Heart right ventricle (tissue), 16 donors: ENCODE measurements at regions of chr12 and their contacts with region 1.

Region 1: DNA sequence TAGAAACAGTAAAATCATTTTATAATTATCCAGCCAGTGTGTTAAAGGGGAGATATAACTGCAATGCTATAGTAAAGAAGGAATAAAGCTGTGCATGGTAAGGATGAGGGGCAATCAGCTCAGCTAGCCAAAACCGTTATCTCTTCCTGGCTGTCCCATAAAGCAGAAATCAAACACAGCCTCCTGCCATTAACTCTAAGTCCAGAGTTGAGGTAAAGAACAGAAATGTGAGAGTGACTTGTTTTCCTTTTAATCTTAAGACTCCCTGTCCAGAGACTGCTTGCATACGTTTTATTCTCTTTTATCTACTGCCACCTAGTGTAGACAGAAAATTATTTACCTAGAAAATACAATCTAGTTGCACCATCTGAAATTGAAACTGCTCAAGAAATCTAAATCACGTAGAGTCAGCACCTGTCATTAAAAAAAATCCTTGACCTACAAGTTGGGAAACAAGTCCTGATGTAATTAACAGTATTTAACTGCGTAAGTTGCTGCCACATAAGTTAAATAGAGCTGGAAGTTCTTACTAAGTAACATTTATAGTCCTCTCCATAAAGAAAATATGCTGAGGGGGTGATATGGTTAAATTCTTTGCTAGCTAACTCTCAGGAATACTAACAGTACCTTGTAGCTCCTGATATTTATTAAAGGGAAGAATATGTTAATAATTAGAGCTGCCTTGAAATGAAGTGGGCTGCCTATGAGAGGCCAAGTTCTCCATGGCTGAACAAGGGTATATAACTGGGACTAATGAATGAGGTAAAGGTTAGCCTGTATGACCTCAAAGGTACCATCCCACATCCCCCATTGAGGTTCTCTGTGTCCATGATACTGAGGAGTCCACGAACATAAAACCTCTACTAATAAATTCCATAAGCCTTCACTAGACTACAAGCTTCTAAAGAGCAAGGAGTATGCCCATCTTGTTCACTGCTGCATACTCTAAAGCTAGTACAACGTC is 62.7 kb downstream of the GALNT4 start:
- DNase-seq: no peak
- ATAC-seq: peak; percentile 70 to 96 (median 91)
- H3K4me3 ChIP-seq: peak overlapping the region in 6 of 10 donors; percentile 8 to 34 (median 20)
- H3K27ac ChIP-seq: peak overlapping the region in 9 of 10 donors; percentile 5 to 66 (median 41)
- H3K4me1 ChIP-seq: peaks cover 0 to 19% (median 11%) of the 10 kb centered on the region in 9 donors
- H3K27me3 ChIP-seq: no peaks in the 10 kb centered on the region
- CTCF ChIP-seq: peak; percentile 43 to 74 (median 60)

Region 2: DNA sequence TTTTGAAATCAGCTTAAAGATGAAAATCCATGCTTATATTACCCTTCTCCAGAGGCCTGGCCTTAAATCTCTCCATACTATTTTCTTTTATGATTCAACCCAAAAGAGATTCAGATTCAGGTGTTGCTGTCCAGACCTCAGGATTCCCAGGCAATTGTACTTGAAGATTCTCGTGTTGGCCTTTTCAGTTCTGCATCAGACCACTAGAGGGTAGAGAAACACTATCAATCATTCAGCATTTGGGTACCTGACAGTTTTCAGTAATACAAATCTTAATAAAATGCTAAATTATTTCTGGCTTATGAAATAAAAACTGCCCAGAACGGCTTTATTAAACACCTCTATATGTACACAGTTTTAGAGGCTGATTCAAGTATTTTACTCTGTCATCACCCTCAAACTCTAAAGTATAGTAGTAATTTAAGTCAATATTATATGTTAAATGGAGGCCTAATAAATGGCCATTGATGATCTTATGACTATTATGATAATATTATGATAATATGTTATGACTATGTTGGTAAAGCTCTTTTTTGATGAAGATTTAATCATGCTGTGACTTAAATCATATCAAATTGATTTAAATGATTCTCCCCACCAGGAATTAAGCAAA is 410.8 kb before region 1 on chr12:
- intact Hi-C with region 1: loop called (anchors 1 to 5 kb)
- DNase-seq: peak in 1 of 2 donors; percentile 44
- ATAC-seq: peak in 6 of 8 donors; percentile 70 to 85 (median 79)
- H3K4me3 ChIP-seq: no peak overlapping the region
- H3K27ac ChIP-seq: no peak overlapping the region
- H3K4me1 ChIP-seq: peaks cover 0 to 7% (median 0%) of the 10 kb centered on the region in 9 donors
- H3K27me3 ChIP-seq: no peaks in the 10 kb centered on the region
- CTCF ChIP-seq: peak; percentile 83 to 97 (median 93)

Region 3: DNA sequence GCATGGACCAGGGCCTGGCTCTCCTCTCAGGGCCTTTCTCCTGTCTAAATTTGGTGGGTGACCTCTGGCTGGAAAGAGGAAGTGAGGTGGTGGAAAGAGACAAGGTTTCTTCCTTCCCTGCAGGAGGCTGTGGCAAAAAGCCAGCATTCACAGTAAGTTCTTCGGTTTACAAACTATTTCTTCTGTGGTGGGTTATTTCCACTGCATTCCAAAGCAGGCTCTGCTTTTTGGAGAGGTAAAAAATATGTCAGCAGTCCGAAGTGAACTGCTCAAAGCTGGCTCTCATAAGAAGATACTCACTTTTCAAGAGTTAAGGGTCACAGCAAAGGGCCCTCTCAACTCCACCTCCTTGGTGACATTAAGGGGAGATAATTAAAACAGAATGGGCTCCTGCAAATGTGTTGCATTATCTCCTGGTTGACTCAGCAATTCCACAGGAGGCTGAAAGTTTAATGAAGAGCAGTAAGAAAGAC is 112.8 kb after region 1 on chr12:
- intact Hi-C with region 1: no loop called
- DNase-seq: peak in 1 of 2 donors; percentile 47
- ATAC-seq: peak in 3 of 8 donors; percentile 44 to 65 (median 58)
- H3K4me3 ChIP-seq: no peak overlapping the region
- H3K27ac ChIP-seq: peak overlapping the region in 1 of 10 donors; percentile 16
- H3K4me1 ChIP-seq: peaks cover 0 to 14% (median 4%) of the 10 kb centered on the region in 9 donors
- H3K27me3 ChIP-seq: no peaks in the 10 kb centered on the region
- CTCF ChIP-seq: no peak

Region 4: GRCh38 chr12:89907659-89908058 is 445.7 kb after region 1 on chr12:
- intact Hi-C with region 1: no loop called
- DNase-seq: no peak
- ATAC-seq: no peak
- H3K4me3 ChIP-seq: no peak overlapping the region
- H3K27ac ChIP-seq: no peak overlapping the region
- H3K4me1 ChIP-seq: no peaks in the 10 kb centered on the region
- H3K27me3 ChIP-seq: no peaks in the 10 kb centered on the region
- CTCF ChIP-seq: no peak